Common myeloid progenitor, CD34-positive (primary cell): ENCODE measurements at regions of chr12 and their contacts with region 1.

Region 1: GRCh38 chr12:120367233-120367923 is 1.6 kb downstream of the MSI1 start:
- DNase-seq: peak; percentile 38 to 50 (median 45)
- H3K4me3 ChIP-seq: peak overlapping the region in 3 of 7 experiments; percentile 24 to 31 (median 26)
- H3K27ac ChIP-seq: no peak overlapping the region
- H3K4me1 ChIP-seq: peaks cover 0 to 15% (median 9%) of the 10 kb centered on the region in 4 experiments
- H3K27me3 ChIP-seq: peaks cover 5 to 95% (median 50%) of the 10 kb centered on the region in 5 experiments

Region 2: DNA sequence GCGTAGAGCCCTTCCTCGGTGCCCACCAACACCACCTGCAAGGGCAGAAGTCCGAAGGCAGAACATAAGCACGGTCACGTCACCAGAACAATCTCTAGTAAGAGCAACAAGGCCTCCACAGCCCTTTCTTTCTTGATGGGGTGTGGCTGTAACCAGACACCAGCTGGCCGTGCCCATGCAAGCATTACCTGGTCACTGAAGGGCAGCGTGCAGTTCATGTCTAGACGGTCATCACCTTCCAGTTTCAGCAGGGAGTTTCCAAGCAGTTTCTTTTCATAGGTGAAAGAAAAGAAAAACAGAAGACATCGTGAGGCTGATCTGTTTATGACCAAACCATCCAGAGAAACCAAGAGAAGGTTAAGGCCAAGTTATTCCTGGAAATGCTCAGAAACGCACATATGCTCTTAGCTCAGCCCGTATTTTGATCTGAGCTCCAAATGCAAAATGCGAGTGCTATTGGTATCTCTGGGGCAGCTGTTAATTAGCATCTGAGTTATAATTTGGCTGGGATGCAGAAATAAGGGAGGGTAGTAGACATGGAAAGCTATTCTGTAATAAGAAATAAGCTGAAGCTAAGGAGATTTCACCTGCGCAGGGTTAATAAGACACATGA is 656.9 kb before region 1 on chr12:
- CTCF ChIA-PET with region 1: no interaction called
- POLR2A ChIA-PET with region 1: no interaction called
- DNase-seq: no peak
- H3K4me3 ChIP-seq: no peak overlapping the region
- H3K27ac ChIP-seq: no peak overlapping the region
- H3K4me1 ChIP-seq: no peaks in the 10 kb centered on the region
- H3K27me3 ChIP-seq: no peaks in the 10 kb centered on the region

Region 3: DNA sequence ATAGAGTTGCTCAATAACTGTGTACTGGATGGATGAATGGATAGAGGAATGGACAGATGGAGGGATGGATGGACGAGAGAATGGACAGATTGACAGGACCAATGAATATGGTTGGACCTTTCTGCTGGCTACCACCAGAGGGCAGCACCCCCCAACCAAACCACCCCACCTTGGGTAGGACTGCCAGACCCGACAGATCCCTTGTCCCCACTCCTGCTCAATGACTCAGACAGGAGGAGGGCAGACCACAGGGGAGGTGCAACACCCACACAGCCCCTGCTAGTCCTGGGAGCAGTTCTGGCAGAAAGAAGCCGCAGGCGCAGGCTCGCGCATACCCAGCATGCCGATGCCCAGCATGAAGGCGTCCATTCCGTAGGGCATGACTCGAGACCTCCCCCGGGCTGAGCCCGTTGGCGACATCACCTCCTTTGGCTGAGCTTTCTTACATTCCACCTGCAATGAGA is 10.8 kb before region 1 on chr12:
- CTCF ChIA-PET with region 1: interaction called, 42 read pairs
- POLR2A ChIA-PET with region 1: no interaction called
- DNase-seq: peak; percentile 89 to 94 (median 93)
- H3K4me3 ChIP-seq: no peak overlapping the region
- H3K27ac ChIP-seq: no peak overlapping the region
- H3K4me1 ChIP-seq: peaks cover 0 to 7% (median under 1%) of the 10 kb centered on the region in 4 experiments
- H3K27me3 ChIP-seq: peaks cover 16 to 32% (median 24%) of the 10 kb centered on the region in 5 experiments